Activated naive CD8-positive, alpha-beta T cell treated with anti-CD3 and anti-CD28 coated beads, Interleukin-2, amount 10 ng/mL, durations not matched to agents 7 days and 5 days (primary cell): ENCODE measurements at regions of chr2 and their contacts with region 1.

Region 1: DNA sequence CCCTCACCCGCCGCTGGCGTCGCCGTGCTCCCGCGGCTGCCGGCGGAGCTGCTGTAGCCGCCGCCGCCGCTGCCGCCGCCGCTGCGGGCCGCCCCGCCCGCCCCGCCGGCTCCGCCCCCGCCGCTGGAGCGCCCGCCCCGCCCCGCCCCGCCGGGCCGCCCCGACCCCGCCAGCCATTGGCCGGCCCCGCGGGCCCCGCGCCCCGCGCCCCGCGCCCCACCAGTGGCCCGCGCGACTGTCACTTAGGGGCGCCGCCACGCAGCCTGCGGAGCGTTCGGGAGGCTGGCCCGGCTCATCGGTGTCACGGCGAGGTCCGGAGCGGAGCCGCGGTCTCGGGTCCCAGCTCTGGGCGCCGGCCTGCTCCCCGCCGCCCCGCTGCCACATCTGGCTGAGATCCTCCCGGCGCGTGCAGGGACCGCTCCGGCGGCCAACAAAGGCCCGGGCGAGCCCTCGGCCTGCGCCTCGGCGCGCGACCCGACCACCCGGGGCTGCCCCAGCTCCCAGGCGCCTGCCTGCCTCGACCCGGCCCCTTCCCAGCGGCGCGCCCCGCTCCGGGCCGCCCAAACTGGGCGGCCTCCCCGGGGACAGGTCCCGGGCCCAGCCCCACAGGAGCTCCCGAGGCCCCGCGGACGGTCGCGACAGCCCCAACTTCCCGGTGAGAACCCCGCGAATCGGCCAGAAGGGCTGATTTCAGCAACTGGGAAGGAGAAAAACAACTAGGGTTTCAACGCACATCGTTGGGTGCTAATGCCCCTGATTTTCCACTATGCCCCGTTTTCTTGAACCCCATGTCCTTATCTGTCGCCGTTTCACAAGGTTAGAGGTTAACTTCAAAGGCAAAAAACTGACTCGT is at the start of gene MGAT4A:
- DNase-seq: peak; percentile 88
- ATAC-seq: peak; percentile 85
- H3K4me3 Mint-ChIP-seq: peak within 1 kb of the TSS; percentile 85
- H3K27ac Mint-ChIP-seq: peak within 1 kb of the TSS; percentile 90
- H3K4me1 Mint-ChIP-seq: peaks cover 56% of the 10 kb centered on the region
- H3K27me3 Mint-ChIP-seq: no peaks in the 10 kb centered on the region
- total RNA-seq, gene MGAT4A: 124 to 152 TPM

Region 2: DNA sequence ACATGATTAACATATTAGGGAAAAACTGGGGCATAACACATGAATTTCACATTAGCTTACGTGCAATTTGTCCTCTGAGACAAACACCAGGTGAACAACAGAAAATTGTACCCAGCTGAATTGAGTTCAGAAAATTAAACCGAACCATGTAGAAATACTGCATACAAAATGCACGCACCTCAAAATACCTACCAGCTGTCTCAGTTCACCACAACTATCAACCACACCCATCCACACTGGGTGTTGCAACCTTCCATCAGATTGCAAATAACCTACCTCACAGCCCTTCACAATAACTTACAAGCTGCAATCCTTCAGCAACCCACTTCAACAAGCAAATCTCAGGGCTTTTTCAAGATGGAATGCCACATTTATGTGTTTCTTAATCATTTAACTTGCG is 66.9 kb before region 1 on chr2:
- POLR2A ChIA-PET with region 1: interaction called, 157 read pairs
- DNase-seq: no peak
- ATAC-seq: peak; percentile 65
- H3K4me3 Mint-ChIP-seq: peak overlapping the region; percentile 69
- H3K27ac Mint-ChIP-seq: peak overlapping the region; percentile 97
- H3K4me1 Mint-ChIP-seq: peaks cover 55% of the 10 kb centered on the region
- H3K27me3 Mint-ChIP-seq: no peaks in the 10 kb centered on the region

Region 3: DNA sequence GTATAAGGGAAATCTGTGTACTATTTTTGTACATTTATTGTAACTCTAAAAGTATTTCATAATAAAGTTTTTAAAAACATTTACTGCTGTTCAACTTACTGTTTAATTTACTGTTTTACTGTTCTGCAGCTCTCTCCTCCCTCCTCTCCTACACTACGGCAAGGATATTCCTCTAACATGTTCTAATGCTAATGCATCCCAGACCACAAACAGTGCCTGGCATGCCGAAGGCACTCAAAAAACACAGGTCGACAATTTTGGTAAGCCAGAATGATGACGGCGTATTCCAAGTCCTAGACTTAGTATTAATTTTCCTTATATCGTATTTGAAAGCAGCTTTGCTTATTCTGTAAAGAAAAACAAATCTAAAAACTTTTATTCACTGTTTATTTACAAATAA is 13.6 kb before region 1 on chr2:
- POLR2A ChIA-PET with region 1: interaction called, 16 read pairs
- DNase-seq: no peak
- ATAC-seq: no peak
- H3K4me3 Mint-ChIP-seq: no peak overlapping the region
- H3K27ac Mint-ChIP-seq: no peak overlapping the region
- H3K4me1 Mint-ChIP-seq: peaks cover 51% of the 10 kb centered on the region
- H3K27me3 Mint-ChIP-seq: no peaks in the 10 kb centered on the region

Region 4: GRCh38 chr2:98771721-98772524 is 40.7 kb after region 1 on chr2:
- POLR2A ChIA-PET with region 1: interaction called, 225 read pairs
- DNase-seq: peak; percentile 72
- ATAC-seq: peak; percentile 70
- H3K4me3 Mint-ChIP-seq: peak overlapping the region; percentile 98
- H3K27ac Mint-ChIP-seq: peak overlapping the region; percentile 100
- H3K4me1 Mint-ChIP-seq: peaks cover 60% of the 10 kb centered on the region
- H3K27me3 Mint-ChIP-seq: no peaks in the 10 kb centered on the region

Region 5: DNA sequence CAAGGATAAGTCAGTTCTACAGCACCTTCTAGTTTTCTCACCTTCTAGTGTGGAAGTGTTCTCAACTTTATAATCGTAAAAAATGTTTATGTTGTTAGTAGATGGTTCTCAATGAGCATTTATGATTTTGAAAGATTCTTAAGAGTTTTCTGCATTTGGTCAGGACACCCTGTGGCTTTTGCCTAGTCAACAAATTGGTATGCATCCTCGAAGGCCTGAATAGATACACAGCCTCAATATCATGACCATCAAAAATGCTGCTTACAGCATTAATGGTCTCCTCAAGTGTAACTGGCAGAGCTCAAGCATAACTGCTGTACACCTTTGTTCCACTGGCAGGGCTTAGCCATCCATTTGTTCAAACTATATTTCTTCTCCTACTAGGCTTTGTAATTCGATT is 108.0 kb after region 1 on chr2:
- POLR2A ChIA-PET with region 1: no interaction called
- DNase-seq: no peak
- ATAC-seq: no peak
- H3K4me3 Mint-ChIP-seq: no peak overlapping the region
- H3K27ac Mint-ChIP-seq: no peak overlapping the region
- H3K4me1 Mint-ChIP-seq: peaks cover 17% of the 10 kb centered on the region
- H3K27me3 Mint-ChIP-seq: peaks cover 21% of the 10 kb centered on the region